ENCODE measurements at regions of chr11 and their contacts with region 1.

Region 1: DNA sequence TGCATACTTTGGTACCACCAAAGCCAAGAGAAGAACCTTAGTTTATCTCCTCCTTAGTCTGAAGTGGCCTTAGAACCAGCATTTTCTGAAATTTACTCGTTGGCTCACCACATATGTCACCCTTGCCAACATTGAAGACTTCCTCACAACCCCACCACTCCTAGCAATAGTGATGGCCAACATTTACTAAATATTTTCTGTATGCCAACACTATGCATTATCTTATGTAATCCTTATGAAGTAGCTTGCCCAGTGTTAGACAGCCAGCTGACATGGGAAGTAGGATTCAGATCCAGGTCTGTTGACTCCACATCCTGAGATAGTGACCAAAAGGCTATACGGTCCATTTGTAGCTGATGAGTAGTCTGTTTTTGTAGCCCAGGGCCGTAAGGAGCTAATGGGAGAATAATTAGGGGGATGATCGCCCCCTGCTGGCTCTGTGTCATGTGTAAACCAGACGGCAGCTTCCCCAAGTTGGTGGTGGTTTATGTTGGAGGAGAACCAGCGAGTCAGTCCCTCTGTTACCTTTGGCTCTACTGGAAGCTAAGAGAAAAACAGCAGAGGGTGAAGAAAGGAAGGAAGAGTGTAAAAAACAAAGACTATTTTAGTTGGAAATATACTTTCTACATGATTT is 120.5 kb upstream of the RASSF10 start:
- DNase-seq: peak; percentile 40 to 78 (median 56)
- ATAC-seq: peak; percentile 43
- H3K4me3 ChIP-seq: no peak overlapping the region
- H3K4me3 Mint-ChIP-seq: no peak overlapping the region
- H3K27ac ChIP-seq: no peak overlapping the region
- H3K27ac Mint-ChIP-seq: no peak overlapping the region
- H3K4me1 ChIP-seq: no peaks in the 10 kb centered on the region
- H3K4me1 Mint-ChIP-seq: no peaks in the 10 kb centered on the region
- H3K27me3 ChIP-seq: peaks cover 6 to 8% of the 10 kb centered on the region in 2 experiments
- H3K27me3 Mint-ChIP-seq: peaks cover 5% of the 10 kb centered on the region
- CTCF ChIP-seq: peak; percentile 66

Region 2: GRCh38 chr11:12288212-12288930 is 600.3 kb before region 1 on chr11:
- CTCF ChIA-PET with region 1: interaction called, 4 read pairs
- POLR2A ChIA-PET with region 1: no interaction called
- intact Hi-C with region 1: loop called in 1 of 2 experiments (anchors 2 kb)
- DNase-seq: peak; percentile 15 to 69 (median 32)
- ATAC-seq: no peak
- H3K4me3 ChIP-seq: no peak overlapping the region
- H3K4me3 Mint-ChIP-seq: no peak overlapping the region
- H3K27ac ChIP-seq: no peak overlapping the region
- H3K27ac Mint-ChIP-seq: no peak overlapping the region
- H3K4me1 ChIP-seq: peaks cover 10% of the 10 kb centered on the region
- H3K4me1 Mint-ChIP-seq: peaks cover 18% of the 10 kb centered on the region
- H3K27me3 ChIP-seq: no peaks in the 10 kb centered on the region
- H3K27me3 Mint-ChIP-seq: no peaks in the 10 kb centered on the region
- CTCF ChIP-seq: peak; percentile 73

Region 3: GRCh38 chr11:12411806-12412727 is 476.6 kb before region 1 on chr11:
- CTCF ChIA-PET with region 1: interaction called, 3 read pairs
- POLR2A ChIA-PET with region 1: no interaction called
- intact Hi-C with region 1: loop called (anchors 2 to 10 kb)
- DNase-seq: peak in 8 of 14 experiments; percentile 2 to 44 (median 10)
- ATAC-seq: peak; percentile 46
- H3K4me3 ChIP-seq: no peak overlapping the region
- H3K4me3 Mint-ChIP-seq: no peak overlapping the region
- H3K27ac ChIP-seq: no peak overlapping the region
- H3K27ac Mint-ChIP-seq: no peak overlapping the region
- H3K4me1 ChIP-seq: no peaks in the 10 kb centered on the region
- H3K4me1 Mint-ChIP-seq: no peaks in the 10 kb centered on the region
- H3K27me3 ChIP-seq: peaks cover 2 to 5% of the 10 kb centered on the region in 2 experiments
- H3K27me3 Mint-ChIP-seq: peaks cover 14% of the 10 kb centered on the region
- CTCF ChIP-seq: peak; percentile 48

Region 4: DNA sequence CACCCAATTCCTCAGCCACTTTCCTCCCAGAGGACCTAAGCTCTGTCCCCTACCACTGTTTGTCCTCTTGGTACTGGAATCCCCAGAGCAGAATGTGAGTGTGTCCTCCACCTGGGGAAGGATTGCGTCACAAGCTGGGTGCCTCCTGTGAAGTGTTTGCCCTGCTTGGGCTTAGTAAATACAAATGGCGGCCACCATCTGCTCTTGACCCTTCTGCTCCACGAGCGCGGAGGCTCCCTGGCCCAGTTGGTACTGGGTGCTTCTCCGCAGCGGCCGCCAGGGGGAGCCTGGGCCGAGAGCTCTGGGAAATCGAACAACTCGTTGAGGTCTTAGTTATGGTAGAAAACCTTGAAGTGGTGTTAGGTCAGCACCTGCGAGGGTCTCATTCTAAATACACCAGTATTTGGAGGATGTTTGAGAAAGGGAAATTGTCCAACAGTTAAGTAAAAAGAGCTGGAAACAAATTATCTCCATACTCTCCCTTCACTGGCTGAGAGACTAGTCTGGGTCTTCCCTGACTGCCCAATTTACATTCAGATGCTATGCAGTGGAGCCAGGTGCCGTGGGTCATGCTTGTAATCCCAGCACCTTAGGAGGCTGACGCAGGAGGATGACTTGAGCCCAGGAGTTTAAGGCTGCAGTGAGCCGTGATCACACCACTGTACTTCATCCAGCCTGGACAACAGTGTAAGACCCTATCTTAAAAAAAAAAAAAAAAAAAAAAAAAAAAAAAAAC is 289.1 kb before region 1 on chr11:
- CTCF ChIA-PET with region 1: no interaction called
- POLR2A ChIA-PET with region 1: no interaction called
- intact Hi-C with region 1: loop called (anchors 5 to 10 kb)
- DNase-seq: peak in 10 of 14 experiments; percentile 4 to 45 (median 18)
- ATAC-seq: no peak
- H3K4me3 ChIP-seq: no peak overlapping the region
- H3K4me3 Mint-ChIP-seq: no peak overlapping the region
- H3K27ac ChIP-seq: no peak overlapping the region
- H3K27ac Mint-ChIP-seq: no peak overlapping the region
- H3K4me1 ChIP-seq: peaks cover 16% of the 10 kb centered on the region
- H3K4me1 Mint-ChIP-seq: peaks cover 20% of the 10 kb centered on the region
- H3K27me3 ChIP-seq: peaks cover 0 to 5% of the 10 kb centered on the region in 2 experiments
- H3K27me3 Mint-ChIP-seq: peaks cover 34% of the 10 kb centered on the region
- CTCF ChIP-seq: peak; percentile 77

Region 5: DNA sequence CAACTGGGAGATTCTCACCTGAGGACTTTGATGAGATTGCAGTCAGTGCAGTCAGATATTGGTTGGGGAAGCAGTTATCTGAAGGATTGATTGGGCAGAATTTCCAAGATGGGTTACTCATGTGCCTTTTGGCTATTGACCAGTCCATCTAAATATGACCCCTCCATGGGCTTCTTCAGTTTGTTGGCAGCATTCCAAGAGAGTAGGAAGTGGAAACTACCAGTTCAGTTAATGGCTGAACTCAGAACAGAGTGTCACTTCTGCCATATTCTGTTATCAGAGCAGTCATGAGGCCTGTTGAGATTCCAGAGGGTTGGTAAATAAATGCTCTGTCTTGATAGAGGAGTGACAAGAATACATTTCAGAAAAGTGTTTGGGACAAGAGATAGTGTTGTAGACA is 1932.4 kb after region 1 on chr11:
- CTCF ChIA-PET with region 1: no interaction called
- POLR2A ChIA-PET with region 1: no interaction called
- intact Hi-C with region 1: no loop called
- DNase-seq: no peak
- ATAC-seq: no peak
- H3K4me3 ChIP-seq: no peak overlapping the region
- H3K4me3 Mint-ChIP-seq: no peak overlapping the region
- H3K27ac ChIP-seq: no peak overlapping the region
- H3K27ac Mint-ChIP-seq: no peak overlapping the region
- H3K4me1 ChIP-seq: no peaks in the 10 kb centered on the region
- H3K4me1 Mint-ChIP-seq: no peaks in the 10 kb centered on the region
- H3K27me3 ChIP-seq: no peaks in the 10 kb centered on the region
- H3K27me3 Mint-ChIP-seq: no peaks in the 10 kb centered on the region
- CTCF ChIP-seq: no peak